Endothelial cell of umbilical vein (primary cell): ENCODE measurements at regions of chr3 and their contacts with region 1.

Region 1: DNA sequence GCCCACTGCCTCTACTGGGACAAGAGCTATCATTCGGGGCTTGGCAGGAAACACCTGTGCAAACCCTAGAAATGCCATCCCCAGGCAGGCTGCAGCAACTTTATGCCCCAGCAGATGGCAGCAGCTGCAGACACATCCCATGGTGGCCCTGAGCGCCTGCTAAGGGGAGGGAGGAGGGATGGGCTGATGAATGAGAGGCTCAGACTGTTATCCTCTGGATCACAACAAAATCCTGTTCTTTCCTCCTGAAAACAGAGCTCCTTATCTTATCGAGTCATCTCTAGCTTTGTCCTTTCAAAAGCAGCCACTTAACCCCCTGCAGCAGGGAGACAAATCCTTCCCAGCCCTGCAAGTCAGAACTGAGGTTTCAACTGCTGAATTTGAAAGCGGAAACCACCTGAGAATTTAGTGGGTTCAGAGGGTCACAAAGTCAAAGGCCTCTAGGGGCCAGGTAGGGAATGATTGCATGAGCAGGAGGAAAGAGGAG is 90.6 kb upstream of the PROK2 start:
- DNase-seq: peak; percentile 74
- H3K4me3 ChIP-seq: no peak overlapping the region
- H3K27ac ChIP-seq: no peak overlapping the region
- H3K4me1 ChIP-seq: no peaks in the 10 kb centered on the region
- H3K27me3 ChIP-seq: no peaks in the 10 kb centered on the region
- CTCF ChIP-seq: peak; percentile 76 to 90
- POLR2A ChIP-seq: no peak

Region 2: DNA sequence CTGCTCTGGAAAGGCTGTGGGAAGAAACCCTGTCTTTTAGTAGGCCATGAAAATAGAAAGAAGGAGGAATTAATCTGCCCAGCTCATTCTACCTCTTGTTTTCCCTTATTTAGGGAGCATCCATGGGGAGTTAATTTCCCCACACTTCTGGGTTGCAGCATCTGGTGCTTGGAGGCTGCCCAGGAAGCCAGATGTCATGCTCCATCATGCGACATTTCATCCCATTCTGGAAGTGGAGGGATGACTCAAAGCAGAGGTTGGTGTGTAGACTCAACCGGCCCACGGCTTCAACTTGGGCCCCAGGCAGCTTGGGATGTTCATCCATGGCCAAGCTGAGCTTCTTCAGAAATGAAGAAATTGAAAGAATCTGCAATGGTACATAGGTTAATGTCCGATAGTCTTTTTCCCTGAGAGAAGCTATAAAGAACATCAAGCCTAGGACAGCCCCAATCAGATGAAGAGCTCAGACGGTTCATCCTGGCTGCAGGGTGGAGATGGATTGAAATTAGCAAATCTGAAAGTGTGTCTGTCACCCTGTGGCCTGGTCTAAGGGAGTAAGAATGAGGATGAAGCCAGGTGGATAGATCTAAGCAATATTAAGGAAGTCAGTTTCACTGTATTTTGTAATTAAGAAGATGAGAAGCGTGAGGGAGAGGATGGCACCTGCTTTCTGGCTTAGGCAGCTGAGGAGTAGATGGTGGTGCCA is 66.0 kb before region 1 on chr3:
- CTCF ChIA-PET with region 1: no interaction called
- POLR2A ChIA-PET with region 1: no interaction called
- dilution Hi-C with region 1: no loop called
- intact Hi-C with region 1: no loop called
- DNase-seq: no peak
- H3K4me3 ChIP-seq: no peak overlapping the region
- H3K27ac ChIP-seq: no peak overlapping the region
- H3K4me1 ChIP-seq: no peaks in the 10 kb centered on the region
- H3K27me3 ChIP-seq: peaks cover 0 to 2% of the 10 kb centered on the region in 2 experiments
- CTCF ChIP-seq: no peak
- POLR2A ChIP-seq: no peak

Region 3: GRCh38 chr3:71955240-71956068 is 80.0 kb after region 1 on chr3:
- CTCF ChIA-PET with region 1: interaction called, 11 read pairs
- POLR2A ChIA-PET with region 1: no interaction called
- dilution Hi-C with region 1: no loop called
- intact Hi-C with region 1: loop called (anchors 10 kb)
- DNase-seq: peak; percentile 77
- H3K4me3 ChIP-seq: no peak overlapping the region
- H3K27ac ChIP-seq: no peak overlapping the region
- H3K4me1 ChIP-seq: no peaks in the 10 kb centered on the region
- H3K27me3 ChIP-seq: peaks cover 0 to 9% of the 10 kb centered on the region in 2 experiments
- CTCF ChIP-seq: peak; percentile 65 to 77
- POLR2A ChIP-seq: no peak

Region 4: DNA sequence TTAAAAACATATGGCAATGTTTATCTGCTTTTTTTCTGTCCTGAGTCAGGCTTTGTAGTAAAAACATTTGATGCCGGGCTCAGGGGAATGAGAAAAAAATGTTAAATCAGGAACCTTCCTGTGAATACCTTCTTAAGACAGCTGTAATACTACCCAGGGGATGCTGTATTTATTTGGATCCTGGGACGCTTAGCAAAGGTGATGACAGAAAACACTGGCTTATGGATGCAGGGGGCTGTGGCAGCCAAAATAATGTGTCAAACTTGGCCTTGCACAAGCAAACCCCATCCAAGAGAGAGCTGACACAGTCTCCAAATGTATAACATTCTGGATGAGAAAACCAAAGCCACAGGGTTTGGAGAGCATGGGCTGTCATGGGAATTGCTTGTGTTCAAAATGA is 347.6 kb after region 1 on chr3:
- CTCF ChIA-PET with region 1: no interaction called
- POLR2A ChIA-PET with region 1: no interaction called
- dilution Hi-C with region 1: no loop called
- intact Hi-C with region 1: no loop called
- DNase-seq: no peak
- H3K4me3 ChIP-seq: no peak overlapping the region
- H3K27ac ChIP-seq: no peak overlapping the region
- H3K4me1 ChIP-seq: no peaks in the 10 kb centered on the region
- H3K27me3 ChIP-seq: peaks cover 0 to 2% of the 10 kb centered on the region in 2 experiments
- CTCF ChIP-seq: no peak
- POLR2A ChIP-seq: no peak

Region 5: DNA sequence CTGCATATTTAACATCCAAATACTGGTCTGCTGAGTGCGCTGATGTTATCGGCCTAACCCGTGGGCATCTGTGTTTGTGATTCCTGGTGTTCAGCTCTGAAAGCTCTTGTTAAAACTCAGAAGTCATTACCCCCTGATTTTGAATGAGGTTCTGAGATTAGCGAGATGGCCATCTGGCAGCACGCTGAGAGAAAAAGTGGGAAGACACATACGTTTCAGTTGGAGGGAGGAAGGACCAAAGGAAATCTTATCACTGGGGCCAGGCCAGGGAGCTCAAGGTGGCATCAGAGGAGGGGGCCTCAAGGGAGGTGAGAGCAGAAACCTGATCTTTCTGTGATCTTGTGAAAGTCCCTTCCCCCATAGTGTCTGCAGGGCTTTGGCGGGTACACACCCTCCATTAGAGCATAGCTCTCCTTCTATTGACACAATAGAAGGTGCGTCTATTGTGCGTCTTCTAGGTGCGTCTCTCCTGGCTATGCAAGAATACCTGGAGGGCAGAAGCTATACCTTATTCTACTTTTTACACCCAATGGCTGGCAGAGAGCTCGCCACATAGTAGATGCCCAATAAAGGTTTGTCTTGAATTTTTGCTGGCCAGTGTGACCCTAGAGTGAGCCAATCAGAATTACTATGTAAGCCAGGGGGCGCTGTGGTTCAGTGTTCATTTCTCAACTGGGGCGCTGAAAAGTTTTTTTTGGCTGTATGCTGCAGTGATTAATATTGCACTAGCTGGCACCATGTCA is 790.4 kb after region 1 on chr3:
- CTCF ChIA-PET with region 1: interaction called, 10 read pairs
- POLR2A ChIA-PET with region 1: no interaction called
- dilution Hi-C with region 1: no loop called
- intact Hi-C with region 1: no loop called
- DNase-seq: peak; percentile 50
- H3K4me3 ChIP-seq: no peak overlapping the region
- H3K27ac ChIP-seq: no peak overlapping the region
- H3K4me1 ChIP-seq: no peaks in the 10 kb centered on the region
- H3K27me3 ChIP-seq: no peaks in the 10 kb centered on the region
- CTCF ChIP-seq: peak; percentile 61
- POLR2A ChIP-seq: no peak

Region 6: DNA sequence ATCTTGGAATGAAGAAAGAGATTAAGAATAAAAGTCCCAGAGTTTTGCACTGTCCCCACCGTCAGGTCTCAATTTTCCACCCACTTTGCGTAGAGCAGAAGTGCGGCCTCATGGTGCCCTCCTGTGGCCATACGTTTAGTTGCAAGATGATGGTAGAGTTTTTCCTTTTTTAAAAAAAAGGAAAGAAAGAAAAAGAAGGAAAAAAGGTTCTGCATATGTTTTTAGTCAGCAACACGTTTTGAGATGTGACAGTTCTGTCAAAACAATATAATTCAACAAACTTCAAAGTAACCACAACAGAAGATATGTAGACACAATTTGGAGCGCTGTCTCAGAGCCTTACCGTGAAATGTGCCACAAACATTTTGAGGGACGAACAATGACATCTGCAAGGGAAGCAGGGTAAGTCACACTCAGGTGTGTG is 1210.6 kb after region 1 on chr3:
- CTCF ChIA-PET with region 1: interaction called, 3 read pairs
- POLR2A ChIA-PET with region 1: no interaction called
- dilution Hi-C with region 1: no loop called
- intact Hi-C with region 1: loop called (anchors 5 kb)
- DNase-seq: peak; percentile 44
- H3K4me3 ChIP-seq: no peak overlapping the region
- H3K27ac ChIP-seq: no peak overlapping the region
- H3K4me1 ChIP-seq: no peaks in the 10 kb centered on the region
- H3K27me3 ChIP-seq: no peaks in the 10 kb centered on the region
- CTCF ChIP-seq: peak; percentile 55 to 64
- POLR2A ChIP-seq: no peak